MCF 10A (cell line): ENCODE measurements at regions of chr4 and their contacts with region 1.

Region 1: DNA sequence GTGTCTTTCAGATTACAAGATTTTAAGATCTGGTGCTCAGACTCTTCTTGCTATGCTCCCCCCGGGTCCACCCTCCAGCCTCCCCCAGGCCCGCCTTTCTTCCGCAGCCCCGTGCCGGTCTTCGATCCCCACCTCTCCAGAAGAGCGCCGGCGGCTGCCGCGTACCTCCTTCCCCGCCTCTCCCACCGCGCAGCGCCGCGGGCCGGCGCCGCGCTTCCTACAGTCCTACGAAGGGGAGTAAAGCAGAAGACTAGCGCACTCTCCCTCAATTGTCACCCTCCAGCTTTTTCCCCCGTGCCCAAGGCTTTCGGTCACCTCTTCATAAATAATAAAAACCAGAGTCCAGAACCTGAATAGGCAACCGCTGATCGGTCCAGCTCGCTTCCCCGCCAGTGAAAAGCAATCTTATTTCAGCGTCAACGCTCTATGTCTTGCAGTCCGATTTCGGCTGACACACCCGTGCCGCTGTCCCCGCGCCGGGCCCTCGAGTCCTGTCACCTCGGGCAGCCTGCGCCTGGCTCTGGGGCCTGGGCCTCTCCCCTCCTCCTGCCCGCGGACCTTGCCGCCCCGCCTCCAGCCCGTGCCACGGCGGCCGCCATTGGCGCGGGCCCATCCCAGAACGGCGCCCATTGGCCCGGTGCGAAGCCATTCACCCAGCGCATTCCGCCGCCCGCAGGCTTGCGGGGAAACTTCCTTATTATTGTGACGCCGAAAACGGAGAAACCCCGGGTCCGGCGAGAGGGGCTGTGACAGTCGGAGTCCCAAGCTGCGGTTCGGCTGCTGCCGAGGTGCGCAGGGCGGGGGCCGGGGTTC is at the start of gene HERC3:
- DNase-seq: peak; percentile 89
- H3K4me3 Mint-ChIP-seq: peak within 1 kb of the TSS; percentile 83
- H3K27ac Mint-ChIP-seq: peak within 1 kb of the TSS; percentile 77
- H3K4me1 Mint-ChIP-seq: peaks cover 6% of the 10 kb centered on the region
- H3K27me3 Mint-ChIP-seq: no peaks in the 10 kb centered on the region
- CTCF ChIP-seq: no peak
- total RNA-seq, gene HERC3: 34.9 and 64.0 TPM in 2 replicates

Region 2: DNA sequence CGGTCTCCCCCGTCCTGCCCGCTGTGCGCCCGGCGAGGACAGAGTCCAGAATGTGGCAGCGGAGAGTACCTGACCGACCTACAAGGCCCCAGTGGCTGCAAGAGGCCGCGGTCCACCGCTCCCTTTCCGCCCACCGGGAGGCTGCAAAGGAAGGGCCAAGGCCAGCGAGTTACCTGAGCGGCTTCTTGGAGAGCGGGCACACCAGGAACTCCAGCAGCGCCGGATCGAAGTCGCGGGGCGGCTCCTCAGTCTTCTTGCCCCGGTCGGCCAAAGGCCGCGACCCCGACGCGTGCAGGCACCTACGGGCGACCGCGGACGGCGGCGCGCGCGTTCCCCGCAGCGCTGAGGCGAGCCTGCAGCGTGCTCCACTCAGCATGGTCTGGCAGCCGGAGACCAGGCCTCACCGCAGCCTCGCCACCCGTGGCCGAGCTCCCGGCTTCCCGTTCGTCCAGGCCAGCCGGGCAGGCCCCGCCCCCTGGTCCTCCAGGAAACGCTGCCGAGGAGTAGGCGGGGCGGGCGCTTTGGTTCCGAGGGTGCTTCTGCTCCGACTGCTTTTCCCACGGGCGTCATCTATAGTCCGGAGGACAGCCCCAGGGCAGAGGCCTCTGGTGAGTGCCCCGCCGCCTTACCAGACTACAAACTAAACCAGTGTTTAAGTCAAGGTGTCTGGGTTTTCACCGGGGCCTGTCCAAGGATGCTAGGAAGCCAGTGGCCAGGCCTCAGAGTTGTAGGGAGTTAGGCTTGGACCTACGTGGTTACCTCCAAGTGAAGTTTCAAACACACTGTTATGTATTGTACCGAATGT is 68.5 kb before region 1 on chr4 and contains the start of gene PYURF:
- CTCF ChIA-PET with region 1: interaction called, 10 read pairs
- POLR2A ChIA-PET with region 1: interaction called, 16 read pairs
- intact Hi-C with region 1: no loop called
- DNase-seq: peak; percentile 93
- H3K4me3 Mint-ChIP-seq: peak within 1 kb of the TSS; percentile 97
- H3K27ac Mint-ChIP-seq: peak within 1 kb of the TSS; percentile 89
- H3K4me1 Mint-ChIP-seq: peaks cover 14% of the 10 kb centered on the region
- H3K27me3 Mint-ChIP-seq: no peaks in the 10 kb centered on the region
- CTCF ChIP-seq: no peak
- total RNA-seq, gene PYURF: 80.9 and 82.5 TPM in 2 replicates

Region 3: DNA sequence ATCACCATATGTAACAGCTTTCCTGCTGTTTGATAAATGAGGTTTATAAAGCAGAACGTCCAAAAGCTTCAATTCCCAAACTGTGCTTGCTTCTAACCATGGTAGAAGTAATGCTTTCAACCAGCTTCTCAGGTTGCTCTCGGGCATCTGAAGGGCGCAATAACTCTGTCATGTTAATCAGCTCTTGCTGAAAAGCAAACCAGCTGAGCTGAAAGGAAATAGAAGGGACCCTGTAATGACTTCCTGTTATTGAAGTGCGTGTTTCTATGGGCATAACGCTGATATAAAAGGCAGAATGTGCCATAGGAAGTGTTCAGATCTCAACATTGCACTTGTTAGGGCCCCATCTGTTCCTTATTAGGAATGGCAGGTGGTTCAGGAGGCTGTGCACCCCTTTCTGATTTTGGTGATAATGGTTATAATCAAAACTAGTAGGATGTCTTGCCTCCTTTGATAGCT is 21.5 kb after region 1 on chr4:
- CTCF ChIA-PET with region 1: interaction called, 8 read pairs
- POLR2A ChIA-PET with region 1: interaction called, 199 read pairs
- intact Hi-C with region 1: no loop called
- DNase-seq: no peak
- H3K4me3 Mint-ChIP-seq: no peak overlapping the region
- H3K27ac Mint-ChIP-seq: peak overlapping the region; percentile 59
- H3K4me1 Mint-ChIP-seq: peaks cover 56% of the 10 kb centered on the region
- H3K27me3 Mint-ChIP-seq: no peaks in the 10 kb centered on the region
- CTCF ChIP-seq: no peak

Region 4: DNA sequence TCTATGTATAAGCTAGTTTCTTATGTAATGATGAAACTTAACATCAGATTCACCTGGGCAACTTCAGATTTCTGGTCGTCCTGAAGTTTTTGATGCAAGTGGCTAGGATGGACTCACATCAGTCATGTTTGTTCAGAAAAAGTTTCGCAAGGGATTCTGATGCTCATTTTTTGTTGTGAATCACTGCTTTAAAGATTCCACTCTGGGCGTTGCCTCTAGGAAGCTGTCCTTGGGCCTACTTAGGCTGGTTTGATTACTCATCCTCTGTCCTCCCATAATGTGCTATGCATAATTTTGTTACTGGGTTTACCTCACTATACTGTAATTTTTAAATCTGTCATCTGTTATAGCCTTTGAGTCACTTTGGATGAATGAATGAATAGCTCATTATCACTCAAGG is 31.1 kb after region 1 on chr4:
- CTCF ChIA-PET with region 1: interaction called, 6 read pairs
- POLR2A ChIA-PET with region 1: interaction called, 199 read pairs
- intact Hi-C with region 1: loop called (anchors 2 kb)
- DNase-seq: peak; percentile 95
- H3K4me3 Mint-ChIP-seq: peak overlapping the region; percentile 18
- H3K27ac Mint-ChIP-seq: peak overlapping the region; percentile 73
- H3K4me1 Mint-ChIP-seq: peaks cover 29% of the 10 kb centered on the region
- H3K27me3 Mint-ChIP-seq: no peaks in the 10 kb centered on the region
- CTCF ChIP-seq: no peak

Region 5: DNA sequence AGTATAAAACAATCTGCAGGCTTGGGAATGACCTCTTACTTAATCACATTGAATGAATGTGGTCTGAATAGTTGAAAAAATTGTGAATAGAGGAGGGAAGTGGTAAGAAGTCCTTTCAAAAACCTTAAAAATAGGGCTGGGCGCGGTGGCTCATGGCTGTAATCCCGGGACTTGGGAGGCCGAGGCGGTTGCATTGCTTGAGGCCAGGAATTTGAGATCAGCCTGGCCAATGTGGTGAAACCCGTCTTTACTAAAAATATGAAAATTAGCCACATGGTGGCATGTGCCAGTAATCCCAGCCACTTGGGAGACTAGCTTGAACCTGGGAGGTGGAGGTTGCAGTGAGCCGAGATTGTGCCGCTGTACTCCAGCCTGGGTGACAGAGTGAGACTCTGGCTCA is 36.8 kb after region 1 on chr4:
- CTCF ChIA-PET with region 1: interaction called, 6 read pairs
- POLR2A ChIA-PET with region 1: interaction called, 43 read pairs
- intact Hi-C with region 1: loop called (anchors 2 kb)
- DNase-seq: peak; percentile 84
- H3K4me3 Mint-ChIP-seq: peak overlapping the region; percentile 35
- H3K27ac Mint-ChIP-seq: peak overlapping the region; percentile 91
- H3K4me1 Mint-ChIP-seq: peaks cover 19% of the 10 kb centered on the region
- H3K27me3 Mint-ChIP-seq: no peaks in the 10 kb centered on the region
- CTCF ChIP-seq: peak; percentile 17